CD8-positive, alpha-beta memory T cell (primary cell): ENCODE measurements at regions of chr1 and their contacts with region 1.

Region 1: DNA sequence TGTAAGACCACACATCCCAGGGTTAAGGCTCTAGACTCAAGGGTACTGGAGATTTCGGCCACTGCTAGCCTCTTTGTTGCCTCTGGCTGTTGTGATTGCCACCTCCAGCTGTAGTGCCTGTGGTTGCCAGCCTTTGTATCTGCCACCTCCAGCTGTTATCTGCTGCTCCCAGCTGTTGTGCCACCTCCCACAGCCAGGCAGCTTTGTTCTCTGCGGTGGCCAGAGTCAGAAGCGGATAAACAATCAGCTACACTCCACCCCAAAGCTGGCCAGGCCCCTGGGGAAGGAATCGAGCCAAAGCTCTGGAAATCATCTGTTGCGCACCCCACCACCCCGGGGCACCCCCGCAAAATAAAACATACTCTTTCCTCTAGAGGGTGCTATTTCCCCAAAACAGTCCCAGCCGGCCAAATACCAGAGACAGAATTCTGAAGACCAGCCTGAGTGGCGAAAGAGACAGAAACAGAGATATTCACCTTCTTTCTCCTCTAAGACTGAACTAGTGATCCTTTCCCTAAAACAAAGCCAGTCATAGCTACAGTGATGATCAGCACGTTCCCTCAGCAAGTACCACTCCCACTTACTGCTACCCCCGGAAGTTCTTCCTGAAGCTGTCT is 14.8 kb upstream of the PIGM start:
- DNase-seq: peak in 3 of 5 donors; percentile 39 to 62 (median 56)
- H3K4me3 ChIP-seq: peak overlapping the region; percentile 7
- H3K4me3 Mint-ChIP-seq: peak overlapping the region in 6 of 7 donors; percentile 59 to 80 (median 72)
- H3K27ac ChIP-seq: no peak overlapping the region
- H3K27ac Mint-ChIP-seq: peak overlapping the region in 3 of 8 donors; percentile 20 to 78 (median 62)
- H3K4me1 ChIP-seq: peaks cover 10% of the 10 kb centered on the region
- H3K4me1 Mint-ChIP-seq: peaks cover 10 to 11% (median 10%) of the 10 kb centered on the region in 3 donors
- H3K27me3 ChIP-seq: peaks cover 3% of the 10 kb centered on the region
- H3K27me3 Mint-ChIP-seq: peaks cover 13 to 60% of the 10 kb centered on the region in 2 donors

Region 2: DNA sequence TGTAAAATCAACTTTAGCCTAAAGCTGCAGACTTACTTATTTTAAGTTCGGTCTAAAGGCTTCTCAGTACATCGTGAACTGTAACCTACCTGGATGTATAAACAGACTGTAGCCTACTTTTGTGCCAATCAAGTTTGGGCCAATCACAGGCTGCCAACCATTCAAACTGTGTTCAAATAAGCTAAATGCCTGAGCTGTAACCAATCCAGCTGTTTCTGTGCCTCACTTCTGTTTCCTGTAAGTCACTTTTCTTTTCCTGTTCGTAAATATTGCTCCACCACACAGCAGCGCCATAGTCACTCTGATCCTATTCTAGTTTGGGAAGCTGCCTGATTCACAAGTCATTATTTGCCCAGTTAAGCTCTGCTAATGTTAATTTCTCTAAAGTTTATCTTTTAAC is 55.1 kb before region 1 on chr1:
- CTCF ChIA-PET with region 1: no interaction called
- POLR2A ChIA-PET with region 1: no interaction called
- DNase-seq: peak in 1 of 5 donors; percentile 3
- H3K4me3 ChIP-seq: no peak overlapping the region
- H3K4me3 Mint-ChIP-seq: no peak overlapping the region
- H3K27ac ChIP-seq: no peak overlapping the region
- H3K27ac Mint-ChIP-seq: peak overlapping the region in 2 of 8 donors; percentile 19 to 25
- H3K4me1 ChIP-seq: no peaks in the 10 kb centered on the region
- H3K4me1 Mint-ChIP-seq: peaks cover 0 to 6% (median 0%) of the 10 kb centered on the region in 3 donors
- H3K27me3 ChIP-seq: no peaks in the 10 kb centered on the region
- H3K27me3 Mint-ChIP-seq: peaks cover 23 to 45% of the 10 kb centered on the region in 2 donors

Region 3: DNA sequence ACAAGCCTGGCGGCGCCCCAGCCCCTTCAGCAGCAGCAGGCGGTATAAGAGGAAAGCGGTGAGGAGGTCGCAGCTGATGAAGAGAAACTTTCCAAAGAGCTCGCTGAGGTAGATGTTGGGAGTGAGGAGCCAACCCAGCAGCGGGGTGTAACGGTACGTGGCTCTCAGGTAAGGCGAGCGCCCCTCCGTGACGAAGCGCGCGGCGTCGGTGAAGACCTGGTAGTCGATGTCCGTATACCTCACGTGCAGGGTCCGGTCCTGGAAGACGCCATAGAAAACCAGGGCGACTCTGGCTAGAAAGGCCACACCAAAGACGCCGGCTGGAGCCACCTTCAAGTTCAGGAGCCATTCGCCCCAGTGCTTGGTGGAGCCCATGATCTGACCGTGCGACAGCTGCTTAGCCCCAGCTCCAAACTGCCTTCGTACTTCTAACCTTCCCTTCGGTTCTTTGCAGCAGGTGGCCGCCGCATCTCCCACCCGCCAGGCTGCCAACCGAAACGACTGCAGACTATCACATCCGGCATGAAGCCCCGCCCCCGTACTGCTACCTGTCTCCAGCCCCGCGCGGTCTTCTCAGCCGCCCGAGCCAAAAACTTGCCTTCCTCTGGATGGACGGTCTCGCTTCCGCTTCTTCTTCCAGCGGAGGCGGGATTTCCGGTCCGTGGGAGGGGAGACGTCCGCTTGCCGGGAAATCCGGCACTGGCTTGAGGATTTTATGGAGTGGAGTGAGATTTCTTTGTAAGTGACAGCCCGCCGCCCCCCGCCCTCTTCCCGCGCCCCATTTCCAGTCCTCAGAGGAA is 15.0 kb before region 1 on chr1 and contains the start of gene PIGM:
- CTCF ChIA-PET with region 1: interaction called, 22 read pairs
- POLR2A ChIA-PET with region 1: interaction called, 3 read pairs
- DNase-seq: peak; percentile 87 to 94 (median 91)
- H3K4me3 ChIP-seq: peak within 1 kb of the TSS; percentile 66
- H3K4me3 Mint-ChIP-seq: peak within 1 kb of the TSS; percentile 93 to 99 (median 96)
- H3K27ac ChIP-seq: peak within 1 kb of the TSS; percentile 58
- H3K27ac Mint-ChIP-seq: peak within 1 kb of the TSS; percentile 73 to 98 (median 95)
- H3K4me1 ChIP-seq: peaks cover 25% of the 10 kb centered on the region
- H3K4me1 Mint-ChIP-seq: peaks cover 37 to 58% (median 47%) of the 10 kb centered on the region in 3 donors
- H3K27me3 ChIP-seq: no peaks in the 10 kb centered on the region
- H3K27me3 Mint-ChIP-seq: no peaks in the 10 kb centered on the region
- total RNA-seq, gene PIGM: 6.5 to 6.9 TPM

Region 4: GRCh38 chr1:160058087-160058486 is 11.5 kb after region 1 on chr1:
- CTCF ChIA-PET with region 1: interaction called, 10 read pairs
- POLR2A ChIA-PET with region 1: no interaction called
- DNase-seq: no peak
- H3K4me3 ChIP-seq: no peak overlapping the region
- H3K4me3 Mint-ChIP-seq: no peak overlapping the region
- H3K27ac ChIP-seq: no peak overlapping the region
- H3K27ac Mint-ChIP-seq: no peak overlapping the region
- H3K4me1 ChIP-seq: no peaks in the 10 kb centered on the region
- H3K4me1 Mint-ChIP-seq: no peaks in the 10 kb centered on the region
- H3K27me3 ChIP-seq: no peaks in the 10 kb centered on the region
- H3K27me3 Mint-ChIP-seq: peaks cover 28 to 83% of the 10 kb centered on the region in 2 donors

Region 5: DNA sequence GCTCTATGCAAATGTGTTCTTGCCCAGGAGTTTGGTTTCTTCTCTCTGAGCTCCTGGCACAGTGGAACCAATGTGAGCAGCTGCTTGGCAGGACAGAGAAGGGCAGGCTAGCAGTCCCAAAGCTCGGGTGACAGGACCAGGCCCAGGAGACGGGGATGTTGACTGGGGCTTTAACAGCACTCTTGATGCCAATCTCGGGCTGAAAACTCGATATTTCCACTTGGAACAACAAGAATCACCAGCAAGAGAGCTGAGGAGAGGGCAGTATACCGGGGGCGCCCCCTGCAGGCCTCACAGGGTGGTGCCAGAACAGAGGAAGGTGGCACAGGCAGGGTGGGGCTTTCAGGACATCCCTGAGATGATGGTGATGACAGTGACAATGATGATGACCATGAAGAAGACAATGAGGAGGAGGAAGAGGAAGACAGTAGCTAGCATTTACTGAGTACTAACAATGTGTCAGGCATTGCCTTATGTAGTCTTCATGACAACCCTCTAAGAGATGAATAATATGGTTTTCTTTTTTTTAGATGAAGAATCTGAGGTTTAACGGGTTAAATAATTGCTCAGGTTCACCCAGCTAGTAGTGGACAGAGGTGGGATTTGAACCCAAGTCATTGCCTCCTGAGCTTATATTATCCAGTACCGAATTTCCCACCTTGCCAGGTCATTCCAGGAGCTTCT is 32.1 kb after region 1 on chr1:
- CTCF ChIA-PET with region 1: interaction called, 63 read pairs
- POLR2A ChIA-PET with region 1: no interaction called
- DNase-seq: peak in 4 of 5 donors; percentile 36 to 51 (median 43)
- H3K4me3 ChIP-seq: no peak overlapping the region
- H3K4me3 Mint-ChIP-seq: no peak overlapping the region
- H3K27ac ChIP-seq: no peak overlapping the region
- H3K27ac Mint-ChIP-seq: no peak overlapping the region
- H3K4me1 ChIP-seq: peaks cover 2% of the 10 kb centered on the region
- H3K4me1 Mint-ChIP-seq: peaks cover 0 to 4% (median 3%) of the 10 kb centered on the region in 3 donors
- H3K27me3 ChIP-seq: peaks cover 42% of the 10 kb centered on the region
- H3K27me3 Mint-ChIP-seq: peaks cover 38 to 78% of the 10 kb centered on the region in 2 donors

Region 6: DNA sequence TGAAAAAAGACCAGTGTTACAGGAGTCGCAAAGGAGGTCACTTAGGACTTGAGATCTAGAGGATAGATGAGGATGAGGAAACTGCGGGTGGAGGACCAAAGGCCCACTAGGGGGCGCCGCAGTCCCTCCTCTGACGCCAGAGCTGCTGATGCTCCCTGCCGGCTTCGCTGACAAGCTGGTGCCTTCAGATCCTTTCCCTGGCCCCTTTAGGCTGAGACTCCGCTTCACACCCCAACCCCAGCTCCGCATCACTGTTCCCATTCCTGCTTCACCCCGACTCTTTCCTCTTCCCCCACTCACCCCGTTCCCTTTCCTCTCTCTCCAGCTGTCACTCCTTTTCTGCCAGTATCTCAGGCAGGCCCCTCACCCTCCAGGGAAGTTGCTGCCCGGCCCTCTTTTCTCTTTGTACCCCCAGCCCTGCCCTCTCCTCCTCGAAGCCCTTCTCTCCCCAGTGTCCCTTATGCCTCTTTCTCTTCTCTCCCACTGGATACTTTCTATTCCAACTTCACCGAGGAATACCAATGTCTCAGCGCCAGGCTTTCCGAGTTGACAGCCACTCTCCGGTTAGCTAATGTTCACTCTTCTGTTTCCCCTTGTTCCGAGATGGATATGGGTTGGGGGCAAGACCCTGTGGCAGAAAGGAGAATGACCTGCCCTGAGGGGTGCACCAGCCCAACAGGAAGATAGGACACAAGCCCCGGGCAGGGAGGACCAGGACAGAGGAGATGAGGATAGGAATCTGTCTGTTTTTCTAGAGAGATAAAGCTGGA is 39.3 kb after region 1 on chr1:
- CTCF ChIA-PET with region 1: interaction called, 63 read pairs
- POLR2A ChIA-PET with region 1: no interaction called
- DNase-seq: peak; percentile 48 to 79 (median 69)
- H3K4me3 ChIP-seq: no peak overlapping the region
- H3K4me3 Mint-ChIP-seq: peak overlapping the region in 3 of 7 donors; percentile 6 to 54 (median 32)
- H3K27ac ChIP-seq: no peak overlapping the region
- H3K27ac Mint-ChIP-seq: peak overlapping the region in 4 of 8 donors; percentile 21 to 83 (median 64)
- H3K4me1 ChIP-seq: peaks cover 3% of the 10 kb centered on the region
- H3K4me1 Mint-ChIP-seq: peaks cover 11 to 14% (median 14%) of the 10 kb centered on the region in 3 donors
- H3K27me3 ChIP-seq: peaks cover 13% of the 10 kb centered on the region
- H3K27me3 Mint-ChIP-seq: peaks cover 15 to 24% of the 10 kb centered on the region in 2 donors

Region 7: GRCh38 chr1:160117709-160118183 is 71.1 kb after region 1 on chr1:
- CTCF ChIA-PET with region 1: no interaction called
- POLR2A ChIA-PET with region 1: no interaction called
- DNase-seq: no peak
- H3K4me3 ChIP-seq: no peak overlapping the region
- H3K4me3 Mint-ChIP-seq: no peak overlapping the region
- H3K27ac ChIP-seq: no peak overlapping the region
- H3K27ac Mint-ChIP-seq: no peak overlapping the region
- H3K4me1 ChIP-seq: no peaks in the 10 kb centered on the region
- H3K4me1 Mint-ChIP-seq: no peaks in the 10 kb centered on the region
- H3K27me3 ChIP-seq: peaks cover 12% of the 10 kb centered on the region
- H3K27me3 Mint-ChIP-seq: peaks cover 12 to 36% of the 10 kb centered on the region in 2 donors